Activated naive CD4-positive, alpha-beta T cell treated with anti-CD3 and anti-CD28 coated beads, Interleukin-2, amount 10 ng/mL, durations not matched to agents 7 days and 5 days (primary cell): ENCODE measurements at regions of chr1 and their contacts with region 1.

Region 1: GRCh38 chr1:228794173-228794572 is 58.9 kb downstream of the RHOU start:
- DNase-seq: peak; percentile 72
- H3K4me3 Mint-ChIP-seq: no peak overlapping the region
- H3K27ac Mint-ChIP-seq: no peak overlapping the region
- H3K4me1 Mint-ChIP-seq: peaks cover 25% of the 10 kb centered on the region
- H3K27me3 Mint-ChIP-seq: no peaks in the 10 kb centered on the region

Region 2: GRCh38 chr1:228734881-228735801 is 59.0 kb before region 1 on chr1 and contains the start of gene RHOU:
- CTCF ChIA-PET with region 1: interaction called, 38 read pairs
- DNase-seq: peak; percentile 78
- H3K4me3 Mint-ChIP-seq: peak within 1 kb of the TSS; percentile 90
- H3K27ac Mint-ChIP-seq: peak within 1 kb of the TSS; percentile 83
- H3K4me1 Mint-ChIP-seq: peaks cover 38% of the 10 kb centered on the region
- H3K27me3 Mint-ChIP-seq: peaks cover 20% of the 10 kb centered on the region

Region 3: GRCh38 chr1:228804671-228805413 is 10.7 kb after region 1 on chr1:
- CTCF ChIA-PET with region 1: interaction called, 26 read pairs
- DNase-seq: peak; percentile 79
- H3K4me3 Mint-ChIP-seq: peak overlapping the region; percentile 53
- H3K27ac Mint-ChIP-seq: peak overlapping the region; percentile 95
- H3K4me1 Mint-ChIP-seq: peaks cover 86% of the 10 kb centered on the region
- H3K27me3 Mint-ChIP-seq: no peaks in the 10 kb centered on the region